PC-3 (cell line): ENCODE measurements at regions of chr3 and their contacts with region 1.

Region 1: GRCh38 chr3:150183678-150184425 is 213.2 kb upstream of the PFN2 start:
- DNase-seq: peak; percentile 86
- ATAC-seq: peak; percentile 95
- H3K4me3 ChIP-seq: peak overlapping the region; percentile 66
- H3K27ac ChIP-seq: peak overlapping the region; percentile 33
- H3K4me1 ChIP-seq: peaks cover 16% of the 10 kb centered on the region
- H3K27me3 ChIP-seq: no peaks in the 10 kb centered on the region
- CTCF ChIP-seq: peak; percentile 92

Region 2: DNA sequence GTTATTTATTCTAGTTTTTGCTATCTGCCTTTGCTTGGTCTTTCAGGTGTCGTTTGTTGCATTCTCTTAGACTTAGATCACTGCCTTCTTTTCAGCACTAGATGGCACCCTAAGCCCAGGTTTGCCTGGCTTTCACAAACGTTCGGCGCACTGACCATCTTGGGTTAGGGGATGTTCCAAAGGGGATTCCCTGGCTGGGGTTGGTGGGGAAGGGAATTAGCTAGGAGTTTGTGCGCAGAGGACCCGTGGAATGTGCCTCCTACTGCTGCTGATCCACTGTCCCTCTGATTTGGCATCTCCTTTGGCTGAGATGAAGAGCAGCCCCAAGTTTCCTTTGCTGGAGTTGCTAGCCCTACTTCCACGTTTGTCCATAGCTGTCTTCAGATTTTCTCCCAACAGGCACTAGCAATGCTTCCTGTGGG is 247.0 kb before region 1 on chr3:
- CTCF ChIA-PET with region 1: interaction called, 3 read pairs
- POLR2A ChIA-PET with region 1: interaction called, 4 read pairs
- intact Hi-C with region 1: loop called (anchors 1 kb)
- DNase-seq: peak; percentile 77
- ATAC-seq: peak; percentile 93
- H3K4me3 ChIP-seq: peak overlapping the region; percentile 37; the same call in 1 of the 2 replicates
- H3K27ac ChIP-seq: no peak overlapping the region
- H3K4me1 ChIP-seq: peaks cover 5% of the 10 kb centered on the region; the same call in 1 of the 2 replicates
- H3K27me3 ChIP-seq: no peaks in the 10 kb centered on the region
- CTCF ChIP-seq: peak; percentile 95

Region 3: GRCh38 chr3:150033721-150034120 is 150.1 kb before region 1 on chr3:
- CTCF ChIA-PET with region 1: no interaction called
- POLR2A ChIA-PET with region 1: no interaction called
- intact Hi-C with region 1: loop called (anchors 5 kb)
- DNase-seq: no peak
- ATAC-seq: no peak
- H3K4me3 ChIP-seq: no peak overlapping the region
- H3K27ac ChIP-seq: no peak overlapping the region
- H3K4me1 ChIP-seq: no peaks in the 10 kb centered on the region
- H3K27me3 ChIP-seq: no peaks in the 10 kb centered on the region
- CTCF ChIP-seq: no peak

Region 4: GRCh38 chr3:150079029-150079739 is 104.7 kb before region 1 on chr3:
- CTCF ChIA-PET with region 1: interaction called, 3 read pairs
- POLR2A ChIA-PET with region 1: interaction called, 7 read pairs
- intact Hi-C with region 1: loop called (anchors 1 kb)
- DNase-seq: peak; percentile 91
- ATAC-seq: peak; percentile 74
- H3K4me3 ChIP-seq: no peak overlapping the region
- H3K27ac ChIP-seq: peak overlapping the region; percentile 84
- H3K4me1 ChIP-seq: peaks cover 59% of the 10 kb centered on the region
- H3K27me3 ChIP-seq: no peaks in the 10 kb centered on the region
- CTCF ChIP-seq: no peak

Region 5: DNA sequence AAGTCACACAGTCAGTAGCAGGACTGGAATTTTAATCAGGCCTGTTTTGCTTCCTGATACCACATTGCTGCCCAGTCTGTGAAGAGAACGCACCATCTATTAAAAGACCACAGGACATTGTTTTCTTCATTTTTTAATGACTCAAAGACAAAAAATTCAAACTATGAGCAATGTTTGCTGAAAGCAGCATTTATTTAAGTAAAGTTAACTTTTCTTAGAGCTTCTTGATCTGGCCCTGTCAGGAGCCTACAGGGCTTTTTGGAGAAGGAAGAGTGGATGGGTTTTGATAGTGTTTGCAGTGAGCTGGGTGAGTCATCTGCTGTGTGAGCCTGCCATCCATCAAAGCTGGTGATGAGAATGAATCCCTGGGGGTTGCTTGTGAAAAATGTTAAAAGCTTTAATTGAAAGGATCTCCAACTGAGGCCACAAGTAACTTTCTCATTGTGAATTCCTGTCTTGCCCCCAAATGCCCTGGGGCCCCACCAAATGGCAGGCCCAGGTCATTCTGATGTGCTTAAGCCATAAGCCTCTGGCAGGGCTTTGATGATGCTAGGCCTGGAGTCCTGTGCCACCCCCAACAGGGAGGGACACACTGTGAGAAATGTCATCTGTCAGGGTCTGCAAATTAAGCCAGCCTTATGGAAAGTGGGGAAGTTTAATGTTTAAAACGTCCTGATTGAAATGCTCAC is 77.0 kb before region 1 on chr3:
- CTCF ChIA-PET with region 1: interaction called, 5 read pairs
- POLR2A ChIA-PET with region 1: no interaction called
- intact Hi-C with region 1: loop called (anchors 10 kb)
- DNase-seq: peak; percentile 81
- ATAC-seq: peak; percentile 99
- H3K4me3 ChIP-seq: no peak overlapping the region
- H3K27ac ChIP-seq: peak overlapping the region; percentile 36
- H3K4me1 ChIP-seq: peaks cover 27% of the 10 kb centered on the region
- H3K27me3 ChIP-seq: no peaks in the 10 kb centered on the region
- CTCF ChIP-seq: no peak

Region 6: GRCh38 chr3:150220799-150221198 is 36.9 kb after region 1 on chr3:
- CTCF ChIA-PET with region 1: no interaction called
- POLR2A ChIA-PET with region 1: no interaction called
- intact Hi-C with region 1: loop called (anchors 2 kb)
- DNase-seq: no peak
- ATAC-seq: peak; percentile 22; the same call in 1 of the 2 replicates
- H3K4me3 ChIP-seq: peak overlapping the region; percentile 44; the same call in 1 of the 2 replicates
- H3K27ac ChIP-seq: no peak overlapping the region
- H3K4me1 ChIP-seq: 0 out of 2 replicates have a peak, but pooled peaks cover 3% of the 10 kb centered on the region
- H3K27me3 ChIP-seq: no peaks in the 10 kb centered on the region
- CTCF ChIP-seq: no peak